ENCODE measurements at regions of chr19 and their contacts with region 1.

Region 1: DNA sequence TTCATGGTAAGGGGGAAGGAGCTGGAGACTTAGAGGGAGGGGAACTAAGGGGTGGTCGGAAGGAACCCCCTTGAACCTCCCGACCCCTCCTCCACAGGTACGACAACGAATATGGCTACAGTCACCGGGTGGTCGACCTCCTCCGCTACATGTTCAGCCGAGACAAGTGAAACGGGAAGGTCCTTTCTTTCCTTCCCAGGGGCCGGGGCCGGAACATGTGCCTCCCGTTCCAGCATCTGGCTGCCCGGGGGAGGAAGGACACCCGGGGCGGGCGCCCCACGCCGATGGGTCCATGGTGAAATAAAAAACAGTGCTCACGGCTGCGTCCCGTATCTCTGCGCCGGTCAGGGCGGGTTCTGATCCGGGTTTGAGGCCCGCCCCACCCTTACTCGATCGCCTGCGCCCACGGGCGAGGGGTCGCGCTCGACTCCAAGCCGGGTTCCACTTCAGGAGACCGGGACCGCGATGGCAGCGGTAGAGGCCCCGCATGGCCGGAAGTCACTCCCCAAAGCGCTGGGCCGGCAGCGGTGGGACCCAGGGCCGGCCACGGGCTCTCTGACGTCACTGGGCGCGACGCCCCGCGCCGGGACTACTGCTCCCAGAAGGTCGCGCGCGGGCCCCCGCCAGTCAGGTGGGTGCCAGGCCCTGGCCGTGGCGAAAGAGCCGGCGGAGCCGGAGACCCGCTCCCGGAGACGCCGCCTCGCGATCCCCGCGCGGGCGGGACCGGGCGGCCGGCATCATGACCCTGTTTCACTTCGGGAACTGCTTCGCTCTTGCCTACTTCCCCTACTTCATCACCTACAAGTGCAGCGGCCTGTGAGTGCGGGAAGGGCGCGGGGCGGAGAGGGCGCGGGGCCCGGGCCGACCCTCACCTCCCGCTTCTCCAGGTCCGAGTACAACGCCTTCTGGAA is at the start of gene TMEM147:
- DNase-seq: peak; percentile 92
- H3K4me3 ChIP-seq: peak within 1 kb of the TSS; percentile 88
- H3K27ac ChIP-seq: peak within 1 kb of the TSS; percentile 41
- H3K4me1 ChIP-seq: peaks cover 9% of the 10 kb centered on the region
- H3K27me3 ChIP-seq: no peaks in the 10 kb centered on the region
- CTCF ChIP-seq: no peak
- total RNA-seq, gene TMEM147: 49.6 to 114 TPM

Region 2: DNA sequence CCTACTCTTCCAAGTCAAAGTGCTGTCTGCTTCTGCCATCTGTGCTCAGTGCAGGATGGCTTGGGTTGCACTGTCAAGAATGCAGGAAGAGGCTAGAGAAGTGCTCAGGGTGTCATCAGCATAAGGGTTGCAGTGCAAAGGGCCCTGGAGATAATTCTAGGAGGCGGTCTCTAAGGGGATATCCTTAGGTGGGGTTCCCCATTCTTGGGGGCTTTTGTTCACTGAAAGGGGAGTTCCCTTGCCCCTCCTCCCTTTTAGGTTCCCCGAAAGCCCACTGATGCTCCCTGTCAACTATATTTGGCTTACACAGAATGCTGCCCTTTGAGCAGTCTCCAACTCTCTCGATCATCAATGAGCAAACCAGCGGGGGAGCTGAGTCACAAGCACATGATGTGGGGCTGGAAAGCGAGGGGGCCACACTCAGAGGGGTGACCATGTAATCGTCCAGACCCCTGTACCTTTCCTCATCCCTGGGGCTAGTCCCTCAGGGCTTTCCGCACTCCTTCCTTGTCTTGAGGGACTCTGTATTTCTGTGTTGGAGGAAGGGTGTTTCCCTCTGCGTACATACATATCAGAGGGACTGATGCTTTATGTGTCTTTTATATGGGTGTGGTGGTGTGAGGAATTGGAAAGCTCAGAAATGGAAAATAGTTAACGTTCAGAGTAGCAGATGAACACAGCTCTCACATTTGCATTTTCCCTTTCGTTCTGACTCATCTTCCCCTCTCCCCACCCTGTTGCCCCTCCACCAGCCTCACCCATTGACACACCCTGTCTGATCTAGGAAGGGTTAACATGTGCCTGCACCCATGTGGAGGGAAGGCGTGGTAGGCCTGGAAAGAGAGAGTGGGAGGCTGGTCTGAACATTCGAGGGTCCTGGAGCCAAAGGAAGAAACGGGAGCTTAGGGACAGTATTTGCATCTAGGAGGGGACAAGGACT is 165.8 kb after region 1 on chr19:
- intact Hi-C with region 1: loop called (anchors 5 kb)
- DNase-seq: no peak
- H3K4me3 ChIP-seq: no peak overlapping the region
- H3K27ac ChIP-seq: no peak overlapping the region
- H3K4me1 ChIP-seq: peaks cover 8% of the 10 kb centered on the region
- H3K27me3 ChIP-seq: no peaks in the 10 kb centered on the region
- CTCF ChIP-seq: no peak

Measured in colonic mucosa (tissue), 4 donors.